ENCODE measurements at regions of chr1 and their contacts with region 1.

Region 1: GRCh38 chr1:205325334-205325884 is 3.9 kb upstream of the NUAK2 start:
- DNase-seq: peak in 1 of 3 donors; percentile 91
- ATAC-seq: peak; percentile 47
- H3K4me3 ChIP-seq: no peak overlapping the region
- H3K4me1 ChIP-seq: peaks cover 10% of the 10 kb centered on the region
- CTCF ChIP-seq: peak; percentile 48

Region 2: GRCh38 chr1:205273551-205273982 is 51.8 kb before region 1 on chr1:
- intact Hi-C with region 1: loop called (anchors 2 kb)
- DNase-seq: peak; percentile 89 to 95 (median 91)
- ATAC-seq: peak; percentile 87
- H3K4me3 ChIP-seq: no peak overlapping the region
- H3K4me1 ChIP-seq: peaks cover 16% of the 10 kb centered on the region
- CTCF ChIP-seq: peak; percentile 97

Region 3: DNA sequence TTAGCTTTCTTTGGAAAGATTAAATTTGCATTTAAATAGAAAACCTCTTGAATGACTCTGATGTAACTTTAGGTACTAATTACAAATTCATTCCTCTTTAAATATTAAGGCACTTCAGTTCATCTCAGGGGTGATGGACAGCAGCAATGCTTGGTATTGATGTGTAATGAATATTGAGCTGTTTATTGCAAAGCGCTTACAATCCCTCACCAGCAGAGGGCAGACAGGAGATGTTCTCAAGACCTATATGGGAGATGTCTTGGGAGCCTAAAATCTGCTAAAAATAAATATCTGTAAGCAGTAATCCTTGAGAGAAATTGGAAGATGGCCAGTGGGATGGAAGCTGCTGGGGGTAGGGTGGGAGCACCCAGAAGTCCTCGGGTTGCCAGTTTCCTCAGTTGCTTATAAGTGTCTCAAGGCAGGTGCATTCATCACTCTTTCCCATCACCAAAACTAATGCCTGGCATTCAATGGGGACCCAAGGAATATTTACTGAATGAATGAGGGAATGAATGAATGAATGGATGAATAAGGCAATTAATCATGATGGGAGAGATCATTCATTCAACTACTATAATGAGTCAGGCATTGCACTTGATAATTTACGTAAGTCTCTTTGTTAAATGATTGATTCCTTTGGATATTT is 29.0 kb after region 1 on chr1:
- intact Hi-C with region 1: no loop called
- DNase-seq: peak in 1 of 3 donors; percentile 83
- ATAC-seq: peak; percentile 40
- H3K4me3 ChIP-seq: no peak overlapping the region
- H3K4me1 ChIP-seq: peaks cover 13% of the 10 kb centered on the region
- CTCF ChIP-seq: peak; percentile 78

Region 4: GRCh38 chr1:205528887-205529825 is 203.7 kb after region 1 on chr1:
- intact Hi-C with region 1: no loop called
- DNase-seq: peak; percentile 81 to 91 (median 89)
- ATAC-seq: peak; percentile 85
- H3K4me3 ChIP-seq: no peak overlapping the region
- H3K4me1 ChIP-seq: no peaks in the 10 kb centered on the region
- CTCF ChIP-seq: peak; percentile 84

Measured in mucosa of descending colon (tissue), 3 donors.